ENCODE measurements at regions of chr15 and their contacts with region 1.

Region 1: GRCh38 chr15:71443538-71443937 is 328.3 kb downstream of the THSD4 start:
- DNase-seq: no peak
- H3K4me3 ChIP-seq: no peak overlapping the region
- H3K27ac ChIP-seq: no peak overlapping the region
- H3K27me3 ChIP-seq: no peaks in the 10 kb centered on the region
- CTCF ChIP-seq: peak; percentile 84

Region 2: GRCh38 chr15:71011503-71012155 is 431.9 kb before region 1 on chr15:
- CTCF ChIA-PET with region 1: interaction called, 14 read pairs
- POLR2A ChIA-PET with region 1: no interaction called
- DNase-seq: peak; percentile 44
- H3K4me3 ChIP-seq: no peak overlapping the region
- H3K27ac ChIP-seq: no peak overlapping the region
- H3K27me3 ChIP-seq: no peaks in the 10 kb centered on the region
- CTCF ChIP-seq: peak; percentile 92

Region 3: GRCh38 chr15:71109130-71109529 is 334.4 kb before region 1 on chr15:
- CTCF ChIA-PET with region 1: interaction called, 13 read pairs
- POLR2A ChIA-PET with region 1: no interaction called
- DNase-seq: no peak
- H3K4me3 ChIP-seq: no peak overlapping the region
- H3K27ac ChIP-seq: no peak overlapping the region
- H3K27me3 ChIP-seq: no peaks in the 10 kb centered on the region
- CTCF ChIP-seq: peak; percentile 38

Region 4: DNA sequence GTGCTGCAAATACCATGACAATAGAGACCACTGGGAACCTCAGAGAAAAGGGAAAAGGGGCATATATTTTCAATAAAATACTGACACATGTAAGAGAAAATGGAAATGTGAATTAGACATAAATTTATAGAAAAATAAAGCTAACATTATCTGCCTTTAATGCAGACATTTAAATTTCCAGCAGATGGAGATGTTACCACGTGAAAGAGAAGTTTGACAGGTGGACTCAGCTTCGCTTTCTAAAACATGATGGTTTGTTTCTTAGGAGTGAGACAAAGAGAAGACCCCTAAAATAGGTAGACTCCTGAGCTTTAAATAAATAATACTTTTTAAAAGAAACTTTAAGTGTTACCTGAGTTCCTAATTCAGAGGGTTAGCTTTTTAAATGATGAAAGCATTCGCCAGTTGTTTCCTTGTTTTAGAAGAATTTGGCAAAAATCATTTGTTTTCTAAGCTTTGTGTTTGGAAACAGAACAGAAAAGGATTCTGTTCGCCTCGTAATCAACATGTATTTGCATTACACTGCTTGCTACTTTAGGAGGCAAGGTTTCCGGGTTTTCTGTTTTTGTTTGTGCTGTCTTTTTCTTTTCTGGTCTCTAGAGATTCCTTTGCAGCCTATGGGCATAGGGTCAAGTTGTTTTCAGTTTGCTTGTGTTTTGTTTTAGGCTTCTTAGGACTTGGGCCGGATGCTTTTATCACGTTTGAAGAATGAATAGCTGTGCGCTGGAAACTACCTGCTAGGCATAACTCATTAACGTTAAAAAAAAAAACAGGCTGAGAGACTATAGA is 56.9 kb before region 1 on chr15:
- CTCF ChIA-PET with region 1: interaction called, 28 read pairs
- POLR2A ChIA-PET with region 1: no interaction called
- DNase-seq: no peak
- H3K4me3 ChIP-seq: no peak overlapping the region
- H3K27ac ChIP-seq: no peak overlapping the region
- H3K27me3 ChIP-seq: no peaks in the 10 kb centered on the region
- CTCF ChIP-seq: peak; percentile 43

Measured in AG04450 (cell line).